ENCODE measurements at regions of chr4 and their contacts with region 1.

Region 1: GRCh38 chr4:17544205-17544604 is 29.2 kb downstream of the CLRN2 start:
- DNase-seq: no peak
- ATAC-seq: peak; percentile 38
- H3K4me3 ChIP-seq: no peak overlapping the region
- H3K4me3 Mint-ChIP-seq: no peak overlapping the region
- H3K27ac ChIP-seq: no peak overlapping the region
- H3K27ac Mint-ChIP-seq: no peak overlapping the region
- H3K4me1 ChIP-seq: no peaks in the 10 kb centered on the region
- H3K4me1 Mint-ChIP-seq: peaks cover 0 to 6% (median 0%) of the 10 kb centered on the region in 7 donors
- H3K27me3 ChIP-seq: no peaks in the 10 kb centered on the region
- H3K27me3 Mint-ChIP-seq: peaks cover 0 to 22% (median 16%) of the 10 kb centered on the region in 5 donors

Region 2: DNA sequence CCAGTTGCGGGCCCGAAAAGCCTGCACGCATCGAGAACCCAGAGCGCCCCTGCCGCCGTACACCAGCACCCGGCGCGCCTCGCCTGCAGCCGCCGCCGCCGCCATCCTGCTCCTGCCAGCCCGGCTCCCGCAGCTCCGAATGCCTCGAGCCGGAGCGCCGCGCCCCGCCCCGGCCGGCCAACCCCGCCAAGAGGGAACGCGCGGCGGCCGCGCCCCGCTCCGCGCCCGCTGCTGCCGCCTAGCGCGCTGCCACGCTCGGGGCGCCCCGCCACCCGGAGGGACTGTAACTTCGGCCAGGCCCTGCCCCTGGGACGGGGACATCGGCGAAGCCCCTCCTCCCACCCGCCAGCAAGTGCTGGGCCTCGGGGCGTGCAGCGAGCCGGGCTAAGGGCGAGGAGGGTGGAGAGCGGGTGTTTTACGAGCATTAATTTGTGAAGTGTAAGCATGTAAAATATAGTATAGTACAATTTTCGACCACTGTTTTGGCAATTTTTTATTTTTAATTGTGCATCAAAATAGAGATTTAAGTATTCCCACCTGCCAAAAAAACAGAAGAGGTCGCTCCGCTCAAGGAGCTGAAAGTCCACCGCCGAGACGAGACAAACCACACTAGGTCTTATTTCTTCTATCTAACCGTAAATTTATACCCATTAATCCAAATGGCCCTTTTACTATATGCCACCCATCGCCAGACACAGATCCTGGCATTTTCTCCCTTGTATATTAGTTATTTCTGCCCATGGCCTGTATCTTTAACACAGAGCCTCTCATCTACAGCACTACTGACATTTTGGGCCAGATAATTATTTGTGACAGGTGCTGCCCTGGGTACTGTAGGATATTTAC is 32.0 kb before region 1 on chr4 and contains the start of gene QDPR:
- CTCF ChIA-PET with region 1: no interaction called
- POLR2A ChIA-PET with region 1: no interaction called
- intact Hi-C with region 1: loop called (anchors 1 kb)
- DNase-seq: peak; percentile 55 to 81 (median 70)
- ATAC-seq: peak; percentile 95
- H3K4me3 ChIP-seq: peak within 1 kb of the TSS; percentile 94
- H3K4me3 Mint-ChIP-seq: peak within 1 kb of the TSS; percentile 86 to 100 (median 96)
- H3K27ac ChIP-seq: peak within 1 kb of the TSS; percentile 69
- H3K27ac Mint-ChIP-seq: peak within 1 kb of the TSS; percentile 83 to 96 (median 85)
- H3K4me1 ChIP-seq: peaks cover 9 to 10% of the 10 kb centered on the region in 2 donors
- H3K4me1 Mint-ChIP-seq: peaks cover 18 to 42% (median 34%) of the 10 kb centered on the region in 7 donors
- H3K27me3 ChIP-seq: no peaks in the 10 kb centered on the region
- H3K27me3 Mint-ChIP-seq: peaks cover 0 to 18% (median 6%) of the 10 kb centered on the region in 5 donors
- total RNA-seq, gene QDPR: 11.8 to 27.7 (median 23.1) TPM

Region 3: GRCh38 chr4:17576932-17577665 is 32.9 kb after region 1 on chr4 and contains the start of gene LAP3:
- CTCF ChIA-PET with region 1: interaction called, 3 read pairs
- POLR2A ChIA-PET with region 1: interaction called, 4 read pairs
- intact Hi-C with region 1: loop called (anchors 1 kb)
- DNase-seq: peak; percentile 97 to 100 (median 99)
- ATAC-seq: peak; percentile 94
- H3K4me3 ChIP-seq: peak within 1 kb of the TSS; percentile 77
- H3K4me3 Mint-ChIP-seq: peak within 1 kb of the TSS; percentile 78 to 96 (median 92)
- H3K27ac ChIP-seq: peak within 1 kb of the TSS; percentile 96
- H3K27ac Mint-ChIP-seq: peak within 1 kb of the TSS; percentile 92 to 100 (median 97)
- H3K4me1 ChIP-seq: peaks cover 4 to 11% of the 10 kb centered on the region in 2 donors
- H3K4me1 Mint-ChIP-seq: peaks cover 20 to 47% (median 24%) of the 10 kb centered on the region in 7 donors
- H3K27me3 ChIP-seq: no peaks in the 10 kb centered on the region
- H3K27me3 Mint-ChIP-seq: peaks cover 0 to 2% (median 0%) of the 10 kb centered on the region in 5 donors
- total RNA-seq, gene LAP3: 25.2 to 142 (median 54.9) TPM

Region 4: DNA sequence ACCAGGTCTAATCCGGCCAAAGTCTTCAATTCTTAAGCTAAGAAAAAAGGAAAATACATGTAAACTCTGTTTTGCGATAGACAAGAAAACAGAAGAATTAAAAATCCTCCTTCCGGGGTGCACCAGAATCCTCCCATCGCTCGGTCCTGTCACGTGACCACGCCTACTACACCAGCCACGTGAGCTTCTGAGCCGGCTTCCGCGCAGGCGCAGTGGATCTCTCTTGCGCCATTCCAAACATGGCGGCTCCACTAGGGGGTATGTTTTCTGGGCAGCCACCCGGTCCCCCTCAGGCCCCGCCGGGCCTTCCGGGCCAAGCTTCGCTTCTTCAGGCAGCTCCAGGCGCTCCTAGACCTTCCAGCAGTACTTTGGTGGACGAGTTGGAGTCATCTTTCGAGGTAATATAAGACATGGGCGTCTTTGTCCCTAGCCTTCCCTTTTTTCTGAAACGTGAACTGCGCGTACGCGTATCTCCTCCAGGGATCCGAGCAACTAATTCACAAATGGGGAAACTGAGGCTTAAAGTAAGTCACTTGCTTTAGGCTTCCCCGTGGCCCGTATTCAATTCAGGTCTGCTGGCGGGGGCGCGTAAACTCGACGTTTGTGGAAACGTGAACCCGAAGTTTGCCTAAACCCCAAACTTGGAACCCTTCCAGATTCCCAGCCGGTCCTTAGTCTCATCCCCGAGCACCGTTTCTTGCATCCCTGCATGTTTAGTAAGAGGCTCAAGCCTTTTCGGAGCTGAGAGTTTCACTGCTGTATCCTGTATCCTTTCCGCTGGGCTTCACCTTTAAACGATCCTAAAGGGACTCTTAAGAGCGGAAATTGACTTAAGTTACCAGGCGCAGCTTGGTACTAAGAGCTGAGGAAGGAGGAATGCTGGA is 70.5 kb after region 1 on chr4 and contains the start of gene MED28:
- CTCF ChIA-PET with region 1: no interaction called
- POLR2A ChIA-PET with region 1: interaction called, 8 read pairs
- intact Hi-C with region 1: loop called (anchors 1 kb)
- DNase-seq: peak; percentile 91 to 96 (median 94)
- ATAC-seq: peak; percentile 97
- H3K4me3 ChIP-seq: peak within 1 kb of the TSS; percentile 100
- H3K4me3 Mint-ChIP-seq: peak within 1 kb of the TSS; percentile 86 to 100 (median 96)
- H3K27ac ChIP-seq: peak within 1 kb of the TSS; percentile 94
- H3K27ac Mint-ChIP-seq: peak within 1 kb of the TSS; percentile 92 to 99 (median 97)
- H3K4me1 ChIP-seq: peaks cover 19 to 31% of the 10 kb centered on the region in 2 donors
- H3K4me1 Mint-ChIP-seq: peaks cover 23 to 58% (median 45%) of the 10 kb centered on the region in 7 donors
- H3K27me3 ChIP-seq: no peaks in the 10 kb centered on the region
- H3K27me3 Mint-ChIP-seq: no peaks in the 10 kb centered on the region
- total RNA-seq, gene MED28: 50.1 to 82.1 (median 55.7) TPM

Region 5: GRCh38 chr4:17636696-17637622 is 92.8 kb after region 1 on chr4:
- CTCF ChIA-PET with region 1: interaction called, 21 read pairs
- POLR2A ChIA-PET with region 1: no interaction called
- intact Hi-C with region 1: loop called (anchors 1 kb)
- DNase-seq: peak; percentile 33 to 71 (median 55)
- ATAC-seq: peak; percentile 89
- H3K4me3 ChIP-seq: no peak overlapping the region
- H3K4me3 Mint-ChIP-seq: no peak overlapping the region
- H3K27ac ChIP-seq: peak overlapping the region; percentile 27
- H3K27ac Mint-ChIP-seq: peak overlapping the region in 5 of 9 donors; percentile 32 to 65 (median 48)
- H3K4me1 ChIP-seq: no peaks in the 10 kb centered on the region
- H3K4me1 Mint-ChIP-seq: peaks cover 0 to 3% (median 0%) of the 10 kb centered on the region in 7 donors
- H3K27me3 ChIP-seq: no peaks in the 10 kb centered on the region
- H3K27me3 Mint-ChIP-seq: no peaks in the 10 kb centered on the region

Region 6: DNA sequence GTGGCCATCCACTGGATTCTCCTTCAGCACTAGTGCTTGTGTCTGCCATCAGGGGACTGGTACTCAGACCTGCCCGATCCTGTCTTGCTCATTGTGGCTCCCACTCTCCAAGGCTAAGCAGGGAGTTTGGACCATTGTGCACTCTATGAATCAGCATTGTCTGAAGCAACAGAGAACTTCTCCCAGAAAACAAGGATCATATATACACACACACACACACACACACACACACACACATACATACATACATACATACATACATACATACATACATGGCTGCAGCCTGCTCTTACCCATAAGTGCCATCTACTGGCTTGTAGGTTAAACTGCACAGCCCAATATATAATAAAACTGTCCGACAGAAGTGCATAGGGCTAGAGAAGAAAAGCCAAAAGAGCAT is 822.7 kb after region 1 on chr4:
- CTCF ChIA-PET with region 1: no interaction called
- POLR2A ChIA-PET with region 1: no interaction called
- intact Hi-C with region 1: loop called in 1 of 2 experiments (anchors 2 kb)
- DNase-seq: peak in 4 of 9 donors; percentile 0 to 14 (median 10)
- ATAC-seq: peak; percentile 67
- H3K4me3 ChIP-seq: no peak overlapping the region
- H3K4me3 Mint-ChIP-seq: no peak overlapping the region
- H3K27ac ChIP-seq: no peak overlapping the region
- H3K27ac Mint-ChIP-seq: no peak overlapping the region
- H3K4me1 ChIP-seq: no peaks in the 10 kb centered on the region
- H3K4me1 Mint-ChIP-seq: no peaks in the 10 kb centered on the region
- H3K27me3 ChIP-seq: no peaks in the 10 kb centered on the region
- H3K27me3 Mint-ChIP-seq: peaks cover 0 to 32% (median 13%) of the 10 kb centered on the region in 5 donors

Region 7: GRCh38 chr4:18593445-18594002 is 1049.3 kb after region 1 on chr4:
- CTCF ChIA-PET with region 1: interaction called, 7 read pairs
- POLR2A ChIA-PET with region 1: no interaction called
- intact Hi-C with region 1: loop called in 1 of 2 experiments (anchors 1 kb)
- DNase-seq: peak in 8 of 9 donors; percentile 25 to 65 (median 51)
- ATAC-seq: peak; percentile 78
- H3K4me3 ChIP-seq: no peak overlapping the region
- H3K4me3 Mint-ChIP-seq: peak overlapping the region in 1 of 10 donors; percentile 53
- H3K27ac ChIP-seq: no peak overlapping the region
- H3K27ac Mint-ChIP-seq: no peak overlapping the region
- H3K4me1 ChIP-seq: no peaks in the 10 kb centered on the region
- H3K4me1 Mint-ChIP-seq: peaks cover 0 to 7% (median 0%) of the 10 kb centered on the region in 7 donors
- H3K27me3 ChIP-seq: no peaks in the 10 kb centered on the region
- H3K27me3 Mint-ChIP-seq: peaks cover 0 to 30% (median 15%) of the 10 kb centered on the region in 5 donors

Measured in naive thymus-derived CD4-positive, alpha-beta T cell (primary cell).